ENCODE measurements at regions of chr7 and their contacts with region 1.

Region 1: DNA sequence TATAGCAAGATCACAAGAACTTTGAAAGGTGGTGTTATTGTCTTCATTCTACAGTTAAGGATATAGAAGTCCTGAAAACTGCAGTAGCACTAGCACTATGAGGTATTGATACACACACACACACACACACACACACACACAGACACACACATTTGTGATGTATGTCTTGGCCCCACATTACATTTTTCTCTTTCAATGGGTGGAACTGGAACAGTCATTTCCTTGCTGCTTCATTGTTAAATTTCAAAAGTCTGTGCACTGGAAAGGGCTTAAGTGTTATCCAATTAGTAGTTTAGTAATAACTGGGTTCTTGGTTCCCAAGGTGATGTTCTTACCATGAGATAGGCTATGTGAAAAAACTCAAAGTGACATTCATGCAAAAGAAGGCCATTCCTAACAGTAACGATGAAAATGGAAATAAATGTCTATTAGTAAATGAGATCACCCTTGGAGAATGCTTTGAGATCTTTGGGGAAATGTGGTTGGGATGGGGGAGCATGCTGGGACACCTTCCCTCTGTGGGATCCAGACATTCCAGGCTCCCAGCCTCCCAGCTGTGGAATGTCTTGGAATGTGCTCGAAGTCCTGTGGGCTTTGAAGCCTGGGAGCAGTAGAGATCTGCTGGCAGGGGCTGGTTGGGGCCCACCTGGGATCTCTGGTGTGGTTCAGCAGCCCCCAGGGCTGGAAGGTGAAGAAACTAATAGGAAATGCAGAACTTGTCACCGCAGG is 37.4 kb upstream of the CALD1 start:
- DNase-seq: peak in 1 of 3 donors; percentile 38
- ATAC-seq: peak in 1 of 2 donors; percentile 84
- H3K4me3 ChIP-seq: no peak overlapping the region
- H3K27ac ChIP-seq: peak overlapping the region; percentile 61
- H3K4me1 ChIP-seq: peaks cover 4% of the 10 kb centered on the region
- H3K27me3 ChIP-seq: no peaks in the 10 kb centered on the region

Region 2: DNA sequence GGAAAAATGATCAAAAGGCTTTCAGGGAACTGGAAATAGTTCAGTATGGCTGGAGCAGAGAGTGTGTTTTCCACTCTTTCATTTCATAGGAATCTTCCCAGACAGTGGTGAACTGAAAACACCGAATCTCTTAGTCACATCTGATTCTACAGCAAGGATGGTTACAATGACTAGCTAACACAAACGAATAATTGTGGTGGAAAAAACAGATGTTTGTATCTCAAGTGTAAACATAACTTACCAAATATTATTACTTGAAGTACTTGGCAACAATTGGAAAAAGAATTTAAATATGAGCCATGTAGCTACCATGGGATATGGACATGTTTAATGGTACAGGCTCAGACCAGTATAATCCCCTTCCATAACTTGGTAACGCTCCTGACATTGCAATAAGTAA is 116.5 kb before region 1 on chr7:
- intact Hi-C with region 1: no loop called
- DNase-seq: no peak
- ATAC-seq: no peak
- H3K4me3 ChIP-seq: no peak overlapping the region
- H3K27ac ChIP-seq: no peak overlapping the region
- H3K4me1 ChIP-seq: no peaks in the 10 kb centered on the region
- H3K27me3 ChIP-seq: no peaks in the 10 kb centered on the region

Region 3: DNA sequence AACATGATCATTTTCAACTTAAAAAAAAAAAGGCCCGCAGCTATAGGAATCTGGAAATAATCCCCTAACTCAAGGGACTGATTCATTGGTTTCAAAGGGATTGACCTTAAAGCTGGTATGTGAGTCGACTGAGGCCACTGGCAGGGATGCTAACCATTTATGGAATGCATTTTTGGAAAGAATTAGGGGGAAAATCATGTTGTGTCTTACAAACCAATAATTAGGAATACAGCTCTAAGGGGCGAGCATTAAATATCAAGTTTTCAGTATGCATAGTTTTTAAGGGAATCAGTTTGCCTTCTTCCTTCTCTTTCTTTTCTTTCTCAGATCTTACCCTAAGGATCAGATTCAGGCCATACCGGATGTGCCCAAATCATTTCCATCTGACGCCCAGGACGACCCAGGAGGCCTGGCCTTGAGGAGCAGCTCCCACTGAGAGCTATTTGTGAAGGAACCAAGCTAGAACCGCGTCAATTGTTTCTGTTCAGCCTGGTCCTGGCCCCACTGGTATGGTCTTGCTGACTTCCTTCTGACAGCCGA is 46.7 kb before region 1 on chr7:
- intact Hi-C with region 1: loop called in 2 of 4 experiments (anchors 5 to 10 kb)
- DNase-seq: no peak
- ATAC-seq: peak; percentile 30 to 54
- H3K4me3 ChIP-seq: no peak overlapping the region
- H3K27ac ChIP-seq: no peak overlapping the region
- H3K4me1 ChIP-seq: peaks cover 5% of the 10 kb centered on the region
- H3K27me3 ChIP-seq: no peaks in the 10 kb centered on the region